PC-9 (cell line): ENCODE measurements at regions of chr15 and their contacts with region 1.

Region 1: DNA sequence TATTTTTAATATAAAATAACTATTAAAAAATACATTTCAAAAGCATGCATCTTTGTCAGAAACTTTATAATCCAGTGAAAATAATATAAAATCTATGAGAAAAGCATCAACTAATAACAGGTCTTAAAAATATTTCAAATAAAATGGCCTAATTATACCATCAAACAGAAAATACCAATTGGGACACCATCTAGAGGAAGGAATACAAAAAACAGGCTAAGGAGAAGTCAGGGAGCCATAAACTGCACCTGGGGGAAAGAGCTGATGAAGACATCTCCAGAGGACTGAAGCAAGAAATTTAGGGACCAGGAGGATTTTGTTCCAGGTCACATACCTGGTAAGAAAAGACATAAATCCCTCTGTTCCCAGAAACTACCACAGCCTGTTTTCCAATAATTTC is 48.7 kb downstream of the DMXL2 start:
- DNase-seq: no peak
- H3K4me3 ChIP-seq: no peak overlapping the region
- H3K27ac ChIP-seq: no peak overlapping the region
- H3K4me1 ChIP-seq: peaks cover 31% of the 10 kb centered on the region
- H3K27me3 ChIP-seq: no peaks in the 10 kb centered on the region
- CTCF ChIP-seq: no peak

Region 2: GRCh38 chr15:51622604-51623370 is 48.9 kb after region 1 on chr15 and contains the start of gene DMXL2:
- CTCF ChIA-PET with region 1: interaction called, 3 read pairs
- POLR2A ChIA-PET with region 1: no interaction called
- intact Hi-C with region 1: loop called (anchors 2 kb)
- DNase-seq: peak; percentile 43 to 86
- H3K4me3 ChIP-seq: peak within 1 kb of the TSS; percentile 72
- H3K27ac ChIP-seq: peak within 1 kb of the TSS; percentile 64
- H3K4me1 ChIP-seq: peaks cover 32% of the 10 kb centered on the region
- H3K27me3 ChIP-seq: no peaks in the 10 kb centered on the region
- CTCF ChIP-seq: no peak
- total RNA-seq, gene DMXL2: 25.5 and 29.8 TPM in 2 replicates

Region 3: GRCh38 chr15:52503788-52504496 is 930.0 kb after region 1 on chr15:
- CTCF ChIA-PET with region 1: no interaction called
- POLR2A ChIA-PET with region 1: no interaction called
- intact Hi-C with region 1: no loop called
- DNase-seq: no peak
- H3K4me3 ChIP-seq: no peak overlapping the region
- H3K27ac ChIP-seq: no peak overlapping the region
- H3K4me1 ChIP-seq: no peaks in the 10 kb centered on the region
- H3K27me3 ChIP-seq: no peaks in the 10 kb centered on the region
- CTCF ChIP-seq: no peak